ENCODE measurements at regions of chr7 and their contacts with region 1.

Region 1: GRCh38 chr7:26673271-26673670 is 191.1 kb downstream of the SKAP2 start:
- DNase-seq: peak in 1 of 3 donors; percentile 66
- H3K4me3 ChIP-seq: peak overlapping the region in 4 of 7 experiments; percentile 44 to 73 (median 53)
- H3K27ac ChIP-seq: peak overlapping the region; percentile 81 to 83
- H3K4me1 ChIP-seq: peaks cover 10 to 76% (median 49%) of the 10 kb centered on the region in 4 experiments
- H3K27me3 ChIP-seq: no peaks in the 10 kb centered on the region

Region 2: GRCh38 chr7:26648554-26648953 is 24.7 kb before region 1 on chr7:
- CTCF ChIA-PET with region 1: no interaction called
- POLR2A ChIA-PET with region 1: no interaction called
- DNase-seq: no peak
- H3K4me3 ChIP-seq: no peak overlapping the region
- H3K27ac ChIP-seq: no peak overlapping the region
- H3K4me1 ChIP-seq: peaks cover 0 to 28% (median 21%) of the 10 kb centered on the region in 4 experiments
- H3K27me3 ChIP-seq: no peaks in the 10 kb centered on the region

Region 3: DNA sequence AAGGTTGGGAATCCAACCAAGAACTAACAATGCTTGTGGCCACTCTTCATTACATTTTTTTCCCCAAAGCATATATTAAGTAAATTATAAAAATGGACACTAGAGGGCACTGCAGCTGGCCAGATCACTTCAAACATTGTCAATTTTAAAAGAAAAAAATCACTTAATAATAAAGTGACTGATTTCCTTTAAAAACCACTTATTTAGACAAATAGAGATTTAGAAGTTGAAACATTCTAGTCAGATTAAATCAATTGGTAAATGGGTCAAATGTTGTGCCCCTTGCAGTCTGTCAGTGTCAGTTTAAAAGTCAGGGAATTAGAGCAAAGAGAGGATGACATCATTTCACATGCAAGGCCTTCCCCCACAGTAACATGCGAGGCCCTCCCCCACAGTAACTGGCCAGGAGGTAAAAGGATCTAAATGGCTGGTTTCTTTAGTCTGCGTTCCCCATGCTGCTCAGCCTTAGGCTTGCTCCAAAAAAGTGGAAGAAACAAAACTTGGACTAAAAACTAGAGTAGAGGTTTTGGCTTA is 13.2 kb after region 1 on chr7:
- CTCF ChIA-PET with region 1: interaction called, 18 read pairs
- POLR2A ChIA-PET with region 1: no interaction called
- DNase-seq: peak in 2 of 3 donors; percentile 69 to 79
- H3K4me3 ChIP-seq: no peak overlapping the region
- H3K27ac ChIP-seq: no peak overlapping the region
- H3K4me1 ChIP-seq: peaks cover 37 to 93% (median 60%) of the 10 kb centered on the region in 4 experiments
- H3K27me3 ChIP-seq: no peaks in the 10 kb centered on the region